BJ (cell line): ENCODE measurements at regions of chr16 and their contacts with region 1.

Region 1: DNA sequence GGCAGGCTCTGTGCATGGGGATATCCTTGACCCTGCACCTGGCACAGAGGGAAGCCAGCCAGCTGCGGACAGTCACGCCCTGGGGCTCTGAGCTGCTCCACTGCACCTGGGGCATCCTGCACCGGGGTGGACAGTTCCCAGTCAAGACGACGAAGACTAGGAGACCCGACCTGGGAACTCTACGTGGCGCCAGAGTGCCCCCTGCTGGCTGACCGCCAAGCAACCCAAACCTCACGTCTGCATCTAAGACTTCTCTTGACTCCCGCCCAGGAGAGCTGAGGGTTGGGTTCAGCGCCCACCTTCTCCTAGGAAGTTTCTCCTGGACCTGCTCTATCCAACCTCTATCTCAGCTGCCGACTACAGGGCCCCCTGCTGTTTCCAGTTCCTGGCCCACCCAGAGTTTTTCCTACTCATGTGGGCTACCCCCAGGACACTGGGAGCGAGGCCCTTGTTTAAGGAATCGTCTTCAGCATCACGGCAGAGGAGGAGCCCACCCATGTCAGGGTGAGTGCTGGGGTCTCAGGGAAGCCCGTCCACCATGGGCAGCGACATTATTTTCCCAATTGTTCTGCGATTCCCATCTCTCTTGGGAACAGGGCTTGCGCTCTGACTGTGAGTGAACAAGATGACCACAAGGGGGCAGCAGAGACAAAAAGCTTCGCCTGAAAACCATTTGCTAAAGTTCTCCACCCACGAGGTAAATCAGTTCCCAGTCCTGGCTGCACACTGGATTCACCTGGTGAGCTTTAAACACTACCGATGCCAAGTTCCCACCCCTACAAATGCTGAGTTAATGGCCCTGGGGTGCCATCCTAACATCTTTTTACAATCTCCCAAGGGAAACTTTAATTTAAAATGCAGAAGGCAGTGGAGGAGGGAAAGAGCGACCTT is 29.3 kb downstream of the TLE7 start:
- DNase-seq: no peak
- H3K4me3 ChIP-seq: no peak overlapping the region
- H3K27me3 ChIP-seq: peaks cover 5% of the 10 kb centered on the region
- CTCF ChIP-seq: peak; percentile 86

Region 2: DNA sequence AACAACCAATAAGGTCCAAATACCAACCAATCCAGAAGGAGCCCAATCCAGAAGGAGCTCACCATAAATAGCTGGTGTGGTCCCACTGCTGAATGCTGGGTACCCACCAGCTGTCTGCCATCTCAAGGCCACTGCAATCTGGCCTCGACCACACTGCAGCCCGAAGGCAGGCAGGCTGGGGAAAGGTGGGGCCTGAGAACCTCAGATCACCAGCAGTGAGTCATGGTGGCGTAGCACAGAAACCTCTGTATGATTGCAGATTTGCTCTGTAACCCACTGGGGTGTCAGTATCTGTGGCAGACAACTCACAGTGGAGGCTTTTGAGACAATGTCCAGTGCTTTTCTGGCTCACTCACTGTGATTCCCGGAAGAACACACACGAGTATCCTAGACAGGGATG is 108.6 kb before region 1 on chr16:
- CTCF ChIA-PET with region 1: no interaction called
- POLR2A ChIA-PET with region 1: no interaction called
- DNase-seq: no peak
- H3K4me3 ChIP-seq: no peak overlapping the region
- H3K27me3 ChIP-seq: no peaks in the 10 kb centered on the region
- CTCF ChIP-seq: no peak

Region 3: GRCh38 chr16:71344315-71344905 is 68.1 kb before region 1 on chr16:
- CTCF ChIA-PET with region 1: no interaction called
- POLR2A ChIA-PET with region 1: no interaction called
- DNase-seq: no peak
- H3K4me3 ChIP-seq: no peak overlapping the region
- H3K27me3 ChIP-seq: peaks cover 1% of the 10 kb centered on the region; the same call in 1 of the 2 replicates
- CTCF ChIP-seq: no peak

Region 4: GRCh38 chr16:71387045-71387871 is 25.3 kb before region 1 on chr16:
- CTCF ChIA-PET with region 1: no interaction called
- POLR2A ChIA-PET with region 1: no interaction called
- DNase-seq: no peak
- H3K4me3 ChIP-seq: no peak overlapping the region
- H3K27me3 ChIP-seq: no peaks in the 10 kb centered on the region; the same call in 1 of the 2 replicates
- CTCF ChIP-seq: no peak

Region 5: DNA sequence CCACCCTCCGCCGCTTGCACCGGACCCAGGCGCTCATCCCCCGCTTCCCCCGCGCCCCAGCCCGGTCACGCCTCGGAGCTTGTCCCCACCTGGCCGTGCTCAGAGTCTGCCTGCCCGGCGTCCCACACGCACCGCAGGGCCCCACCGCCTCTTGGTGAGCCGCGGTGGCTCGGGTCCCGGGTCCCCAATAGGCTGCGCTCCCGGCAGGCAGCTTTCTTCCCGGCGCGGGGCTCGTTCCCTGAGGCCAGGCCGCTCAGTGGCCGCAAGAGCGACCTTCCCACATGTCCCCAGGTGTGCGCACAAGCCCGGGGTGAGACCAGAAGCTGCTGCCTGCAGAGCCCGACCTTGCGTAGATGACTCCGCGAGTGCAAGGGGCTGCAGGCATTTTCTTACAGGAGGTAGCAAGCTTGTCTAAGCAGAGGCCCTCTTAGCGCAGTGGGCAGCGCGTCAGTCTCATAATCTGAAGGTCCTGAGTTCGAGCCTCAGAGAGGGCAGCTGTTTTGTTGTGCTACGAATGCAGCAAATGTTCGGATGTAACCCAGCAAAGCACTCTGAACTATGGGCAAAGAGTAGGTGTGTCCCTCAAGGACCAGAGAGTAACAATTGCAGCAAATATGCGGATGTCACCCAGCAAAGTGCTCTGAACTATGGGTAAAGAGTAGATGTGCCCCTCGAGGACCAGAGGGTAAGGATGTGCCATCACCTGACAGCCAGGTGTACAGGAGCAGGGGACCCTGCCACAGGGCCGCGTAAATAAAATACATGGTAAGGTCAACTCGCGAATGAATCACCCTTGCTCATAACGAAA is 13.8 kb after region 1 on chr16:
- CTCF ChIA-PET with region 1: interaction called, 41 read pairs
- POLR2A ChIA-PET with region 1: no interaction called
- DNase-seq: no peak
- H3K4me3 ChIP-seq: peak overlapping the region; percentile 8; the same call in 1 of the 2 replicates
- H3K27me3 ChIP-seq: peaks cover 9% of the 10 kb centered on the region; the same call in 1 of the 2 replicates
- CTCF ChIP-seq: no peak

Region 6: DNA sequence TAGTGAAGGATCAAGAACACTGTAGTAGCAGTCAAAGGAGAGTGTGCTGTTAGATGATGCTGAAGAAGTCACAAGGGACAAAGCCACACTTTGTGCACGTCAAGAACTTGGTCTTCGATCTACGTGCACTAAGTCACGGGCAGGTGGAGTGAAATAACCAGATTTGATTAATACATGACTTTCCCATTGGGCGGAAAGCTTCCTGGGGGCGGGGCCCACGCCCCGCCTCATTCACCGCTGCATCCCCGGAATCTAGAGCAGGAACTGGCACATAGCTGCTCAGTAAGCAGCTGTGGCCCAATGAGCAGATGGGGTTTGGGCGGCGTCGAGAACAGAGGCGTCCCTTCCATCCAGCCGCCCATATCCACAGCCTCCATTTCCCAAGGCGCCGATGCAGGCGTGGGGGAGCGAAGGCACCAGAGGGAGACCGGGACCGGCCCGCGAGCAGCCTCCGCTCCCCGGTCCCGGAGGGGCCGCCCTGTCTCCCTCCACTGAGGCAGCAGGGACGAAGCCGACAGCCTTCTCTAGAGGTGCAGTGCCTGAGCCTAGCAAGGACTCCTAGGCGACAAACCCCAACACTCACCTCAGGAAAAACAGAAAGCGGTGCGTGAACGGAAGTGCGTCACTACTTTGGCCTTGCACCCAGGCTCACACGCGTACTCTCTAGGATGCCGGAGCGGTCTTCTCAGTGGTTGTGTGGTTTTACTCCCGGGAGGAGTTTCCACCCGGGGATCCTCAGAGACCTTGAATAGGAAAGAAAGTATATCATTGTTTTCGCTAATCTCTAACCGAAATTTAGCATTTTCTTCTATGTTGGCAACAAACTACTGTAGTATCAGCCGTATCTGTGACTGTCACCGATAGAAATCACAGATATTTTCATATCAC is 71.7 kb after region 1 on chr16:
- CTCF ChIA-PET with region 1: interaction called, 12 read pairs
- POLR2A ChIA-PET with region 1: no interaction called
- DNase-seq: peak; percentile 51
- H3K4me3 ChIP-seq: peak overlapping the region; percentile 89
- H3K27me3 ChIP-seq: no peaks in the 10 kb centered on the region
- CTCF ChIP-seq: no peak

Region 7: GRCh38 chr16:71499775-71500364 is 87.4 kb after region 1 on chr16:
- CTCF ChIA-PET with region 1: interaction called, 170 read pairs
- POLR2A ChIA-PET with region 1: no interaction called
- DNase-seq: no peak
- H3K4me3 ChIP-seq: no peak overlapping the region
- H3K27me3 ChIP-seq: no peaks in the 10 kb centered on the region; the same call in 1 of the 2 replicates
- CTCF ChIP-seq: peak; percentile 70

Region 8: GRCh38 chr16:71572497-71573116 is 160.1 kb after region 1 on chr16:
- CTCF ChIA-PET with region 1: no interaction called
- POLR2A ChIA-PET with region 1: interaction called, 23 read pairs
- DNase-seq: no peak
- H3K4me3 ChIP-seq: no peak overlapping the region
- H3K27me3 ChIP-seq: no peaks in the 10 kb centered on the region; the same call in 1 of the 2 replicates
- CTCF ChIP-seq: no peak